Right ventricle myocardium inferior (tissue), 1 donor: ENCODE measurements at regions of chr17 and their contacts with region 1.

Region 1: GRCh38 chr17:333626-334396 is 18.8 kb downstream of the RPH3AL start:
- DNase-seq: peak; percentile 89
- ATAC-seq: peak; percentile 87

Region 2: GRCh38 chr17:348692-349425 is 15.0 kb after region 1 on chr17:
- intact Hi-C with region 1: loop called (anchors 2 kb)
- DNase-seq: no peak
- ATAC-seq: peak; percentile 30

Region 3: DNA sequence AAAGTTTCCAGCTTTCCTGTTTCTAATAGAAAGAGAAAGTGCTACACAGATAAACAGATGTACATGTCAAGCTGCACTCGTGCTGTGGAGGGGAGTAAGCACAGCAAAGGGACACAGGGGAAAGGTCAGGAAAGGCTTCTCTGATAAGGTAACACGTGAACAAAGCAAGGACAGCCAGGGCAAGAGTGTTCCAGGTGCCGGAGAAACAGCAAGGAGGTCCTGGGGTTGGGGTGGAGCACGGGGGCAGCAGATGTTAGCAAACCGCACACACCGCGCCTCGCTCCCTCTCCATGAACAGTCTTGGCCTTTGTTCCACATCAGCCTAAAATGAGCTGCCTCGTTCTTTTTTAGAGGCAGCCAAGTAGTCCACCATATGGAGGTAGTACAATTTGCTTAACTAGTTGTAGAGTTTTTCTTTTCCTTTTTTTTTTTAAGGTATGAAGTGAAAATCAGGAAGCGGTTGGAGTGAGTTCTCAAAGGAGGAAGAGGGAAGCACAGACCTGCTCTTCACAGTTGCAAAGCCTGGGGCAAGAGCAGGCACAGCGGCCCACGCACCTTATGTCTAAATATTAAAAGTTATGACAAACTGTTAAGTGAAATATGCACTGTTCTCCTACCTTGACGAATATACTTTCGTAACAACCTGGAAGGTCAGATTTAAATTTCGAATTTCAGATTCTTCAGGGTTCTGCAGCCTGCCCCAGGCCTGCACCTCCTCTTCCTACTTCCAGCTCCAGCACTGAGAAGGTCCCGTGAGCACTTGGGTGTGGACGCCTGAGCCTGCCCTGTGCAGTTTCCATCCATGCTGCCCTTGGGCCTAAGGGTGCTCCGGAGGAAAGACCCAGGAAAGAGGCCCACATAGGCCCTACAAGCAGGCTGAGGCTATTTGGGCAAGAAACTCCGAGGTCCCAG is 60.3 kb after region 1 on chr17:
- intact Hi-C with region 1: no loop called
- DNase-seq: no peak
- ATAC-seq: peak; percentile 37